Activated CD4-positive, alpha-beta memory T cell treated with anti-CD3 and anti-CD28 coated beads for 36 hours (primary cell): ENCODE measurements at regions of chr17 and their contacts with region 1.

Region 1: DNA sequence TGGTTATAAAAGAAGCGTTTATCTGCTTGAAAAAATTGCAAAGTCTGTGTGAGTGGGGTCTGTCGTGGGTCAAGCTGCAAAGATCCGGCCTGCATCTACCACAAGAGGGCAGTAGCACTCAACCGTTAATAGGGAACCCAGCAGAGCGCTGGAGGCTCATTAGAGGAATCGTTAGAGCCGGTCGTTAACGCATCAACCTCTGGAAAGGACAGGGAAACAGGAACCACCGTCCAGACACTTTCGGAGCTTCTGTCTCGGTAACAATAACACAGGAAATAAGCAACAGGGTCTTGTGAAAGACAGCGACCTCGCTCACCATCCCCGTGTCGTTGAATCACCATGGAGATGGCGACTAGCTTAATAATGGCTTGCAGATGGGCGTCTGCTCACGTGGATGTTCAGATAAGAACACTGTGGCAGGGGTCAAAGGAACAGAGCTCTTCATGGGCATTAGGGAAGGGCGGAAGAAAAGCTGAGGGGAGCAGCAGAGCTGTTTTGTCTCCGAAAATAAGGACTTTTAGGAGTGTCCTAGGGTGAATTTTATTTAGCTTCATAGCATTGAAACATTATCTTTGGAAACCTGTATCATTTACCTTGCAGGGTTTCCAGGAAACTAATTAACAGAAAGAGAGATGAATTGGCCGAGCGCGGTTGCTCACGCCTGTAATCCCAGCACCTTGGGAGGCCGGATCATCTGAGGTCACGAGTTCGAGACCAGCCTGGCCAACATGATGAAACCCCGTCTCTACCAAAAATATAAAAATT is 11.9 kb upstream of the NSRP1 start:
- DNase-seq: peak; percentile 82
- H3K4me3 Mint-ChIP-seq: peak overlapping the region; percentile 75
- H3K27ac Mint-ChIP-seq: no peak overlapping the region
- H3K4me1 Mint-ChIP-seq: peaks cover 5% of the 10 kb centered on the region
- H3K27me3 Mint-ChIP-seq: peaks cover 5% of the 10 kb centered on the region

Region 2: GRCh38 chr17:29855686-29856085 is 249.1 kb before region 1 on chr17:
- CTCF ChIA-PET with region 1: no interaction called
- POLR2A ChIA-PET with region 1: no interaction called
- intact Hi-C with region 1: no loop called
- DNase-seq: no peak
- H3K4me3 Mint-ChIP-seq: no peak overlapping the region
- H3K27ac Mint-ChIP-seq: no peak overlapping the region
- H3K4me1 Mint-ChIP-seq: peaks cover 3% of the 10 kb centered on the region
- H3K27me3 Mint-ChIP-seq: no peaks in the 10 kb centered on the region

Region 3: GRCh38 chr17:30093463-30094147 is 11.2 kb before region 1 on chr17:
- CTCF ChIA-PET with region 1: interaction called, 69 read pairs
- POLR2A ChIA-PET with region 1: no interaction called
- intact Hi-C with region 1: no loop called
- DNase-seq: peak; percentile 46
- H3K4me3 Mint-ChIP-seq: no peak overlapping the region
- H3K27ac Mint-ChIP-seq: no peak overlapping the region
- H3K4me1 Mint-ChIP-seq: peaks cover 4% of the 10 kb centered on the region
- H3K27me3 Mint-ChIP-seq: peaks cover 13% of the 10 kb centered on the region

Region 4: GRCh38 chr17:30124273-30124796 is 19.6 kb after region 1 on chr17:
- CTCF ChIA-PET with region 1: interaction called, 52 read pairs
- POLR2A ChIA-PET with region 1: no interaction called
- intact Hi-C with region 1: loop called (anchors 1 kb)
- DNase-seq: no peak
- H3K4me3 Mint-ChIP-seq: no peak overlapping the region
- H3K27ac Mint-ChIP-seq: no peak overlapping the region
- H3K4me1 Mint-ChIP-seq: peaks cover 34% of the 10 kb centered on the region
- H3K27me3 Mint-ChIP-seq: no peaks in the 10 kb centered on the region

Region 5: GRCh38 chr17:30148376-30148775 is 43.6 kb after region 1 on chr17:
- CTCF ChIA-PET with region 1: interaction called, 11 read pairs
- POLR2A ChIA-PET with region 1: no interaction called
- intact Hi-C with region 1: no loop called
- DNase-seq: no peak
- H3K4me3 Mint-ChIP-seq: no peak overlapping the region
- H3K27ac Mint-ChIP-seq: no peak overlapping the region
- H3K4me1 Mint-ChIP-seq: peaks cover 10% of the 10 kb centered on the region
- H3K27me3 Mint-ChIP-seq: no peaks in the 10 kb centered on the region

Region 6: DNA sequence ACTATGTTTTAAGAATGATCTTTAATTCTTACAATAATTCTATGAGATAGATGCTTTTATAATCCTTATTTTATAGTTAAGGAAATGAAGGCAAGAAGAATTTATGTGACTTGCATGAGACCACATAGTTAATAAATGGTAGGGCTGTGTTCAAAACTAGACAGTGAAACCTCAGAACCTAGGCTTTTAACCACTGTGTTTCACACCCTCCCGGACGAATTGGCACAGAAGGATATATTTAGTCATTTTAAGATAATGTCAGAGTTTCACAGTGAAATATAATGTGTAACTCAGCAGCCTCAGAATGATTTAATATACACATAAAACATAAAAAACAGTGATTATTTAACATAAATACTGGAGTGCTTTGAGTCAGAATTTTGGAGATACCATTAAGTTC is 68.9 kb after region 1 on chr17:
- CTCF ChIA-PET with region 1: interaction called, 10 read pairs
- POLR2A ChIA-PET with region 1: no interaction called
- intact Hi-C with region 1: loop called (anchors 10 kb)
- DNase-seq: peak; percentile 32
- H3K4me3 Mint-ChIP-seq: no peak overlapping the region
- H3K27ac Mint-ChIP-seq: no peak overlapping the region
- H3K4me1 Mint-ChIP-seq: peaks cover 19% of the 10 kb centered on the region
- H3K27me3 Mint-ChIP-seq: no peaks in the 10 kb centered on the region

Region 7: GRCh38 chr17:30336369-30337171 is 231.8 kb after region 1 on chr17:
- CTCF ChIA-PET with region 1: interaction called, 99 read pairs
- POLR2A ChIA-PET with region 1: interaction called, 3 read pairs
- intact Hi-C with region 1: loop called (anchors 1 kb)
- DNase-seq: peak; percentile 68
- H3K4me3 Mint-ChIP-seq: peak overlapping the region; percentile 13
- H3K27ac Mint-ChIP-seq: no peak overlapping the region
- H3K4me1 Mint-ChIP-seq: peaks cover 37% of the 10 kb centered on the region
- H3K27me3 Mint-ChIP-seq: no peaks in the 10 kb centered on the region

Region 8: DNA sequence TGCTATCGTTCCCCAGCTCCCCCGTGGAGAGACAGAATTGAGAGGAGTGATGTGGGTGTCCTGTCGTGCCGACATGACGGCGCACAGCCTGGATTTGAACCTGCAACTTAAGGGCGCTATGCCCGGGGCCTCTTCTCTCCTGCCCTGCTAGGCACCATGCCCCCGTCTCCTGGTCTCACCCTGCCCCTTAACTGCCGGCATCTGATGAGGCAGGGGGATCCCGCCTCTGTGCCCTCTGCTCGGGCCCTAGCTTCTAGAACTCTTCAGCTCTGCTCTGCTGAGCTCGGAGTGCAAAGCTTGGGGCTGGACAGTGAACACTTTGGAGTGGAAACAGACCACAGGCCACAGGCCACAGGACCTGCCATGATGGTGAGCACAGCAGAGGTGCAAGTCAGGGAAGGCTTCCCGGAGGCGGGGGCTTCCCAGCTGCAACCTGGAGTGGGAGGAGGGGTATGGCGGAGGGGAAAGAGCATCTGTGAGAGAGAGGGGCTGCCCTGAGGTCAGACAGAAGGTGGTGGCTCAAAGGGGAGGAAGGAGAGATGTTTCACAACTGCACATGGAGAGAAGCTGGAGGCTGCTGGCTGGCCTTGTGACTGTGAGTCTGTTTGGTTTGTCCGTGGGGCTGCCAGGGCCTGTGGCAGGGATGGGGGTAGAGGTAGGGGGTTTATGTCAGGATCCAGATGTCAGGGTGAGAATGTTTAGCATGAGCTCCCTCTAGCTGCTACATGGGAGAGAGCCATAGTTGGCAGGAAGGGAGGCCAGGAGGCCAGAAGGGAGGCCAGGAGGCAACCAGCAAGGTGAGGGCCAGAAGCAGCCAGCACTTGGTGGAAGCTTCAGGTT is 611.9 kb after region 1 on chr17:
- CTCF ChIA-PET with region 1: interaction called, 3 read pairs
- POLR2A ChIA-PET with region 1: no interaction called
- intact Hi-C with region 1: loop called (anchors 10 kb)
- DNase-seq: no peak
- H3K4me3 Mint-ChIP-seq: no peak overlapping the region
- H3K27ac Mint-ChIP-seq: no peak overlapping the region
- H3K4me1 Mint-ChIP-seq: peaks cover 6% of the 10 kb centered on the region
- H3K27me3 Mint-ChIP-seq: no peaks in the 10 kb centered on the region